ENCODE measurements at regions of chr10 and their contacts with region 1.

Region 1: GRCh38 chr10:3811291-3811870 is 26.4 kb upstream of the KLF6 start:
- DNase-seq: peak; percentile 65
- H3K4me3 Mint-ChIP-seq: peak overlapping the region; percentile 38
- H3K27ac Mint-ChIP-seq: peak overlapping the region; percentile 96
- H3K4me1 Mint-ChIP-seq: peaks cover 79% of the 10 kb centered on the region
- H3K27me3 Mint-ChIP-seq: no peaks in the 10 kb centered on the region

Region 2: GRCh38 chr10:3226960-3227744 is 584.2 kb before region 1 on chr10:
- intact Hi-C with region 1: loop called (anchors 2 kb)
- DNase-seq: no peak
- H3K4me3 Mint-ChIP-seq: no peak overlapping the region
- H3K27ac Mint-ChIP-seq: no peak overlapping the region
- H3K4me1 Mint-ChIP-seq: peaks cover 15% of the 10 kb centered on the region
- H3K27me3 Mint-ChIP-seq: peaks cover 26% of the 10 kb centered on the region

Region 3: GRCh38 chr10:3828404-3829155 is 17.2 kb after region 1 on chr10:
- intact Hi-C with region 1: loop called (anchors 1 kb)
- DNase-seq: no peak
- H3K4me3 Mint-ChIP-seq: peak overlapping the region; percentile 42
- H3K27ac Mint-ChIP-seq: peak overlapping the region; percentile 88
- H3K4me1 Mint-ChIP-seq: peaks cover 47% of the 10 kb centered on the region
- H3K27me3 Mint-ChIP-seq: no peaks in the 10 kb centered on the region

Region 4: GRCh38 chr10:3867454-3868270 is 56.3 kb after region 1 on chr10:
- intact Hi-C with region 1: loop called (anchors 1 kb)
- DNase-seq: no peak
- H3K4me3 Mint-ChIP-seq: no peak overlapping the region
- H3K27ac Mint-ChIP-seq: peak overlapping the region; percentile 88
- H3K4me1 Mint-ChIP-seq: peaks cover 60% of the 10 kb centered on the region
- H3K27me3 Mint-ChIP-seq: no peaks in the 10 kb centered on the region

Region 5: GRCh38 chr10:3972460-3973301 is 161.3 kb after region 1 on chr10:
- intact Hi-C with region 1: loop called (anchors 1 kb)
- DNase-seq: no peak
- H3K4me3 Mint-ChIP-seq: peak overlapping the region; percentile 68
- H3K27ac Mint-ChIP-seq: peak overlapping the region; percentile 95
- H3K4me1 Mint-ChIP-seq: peaks cover 42% of the 10 kb centered on the region
- H3K27me3 Mint-ChIP-seq: no peaks in the 10 kb centered on the region

Region 6: DNA sequence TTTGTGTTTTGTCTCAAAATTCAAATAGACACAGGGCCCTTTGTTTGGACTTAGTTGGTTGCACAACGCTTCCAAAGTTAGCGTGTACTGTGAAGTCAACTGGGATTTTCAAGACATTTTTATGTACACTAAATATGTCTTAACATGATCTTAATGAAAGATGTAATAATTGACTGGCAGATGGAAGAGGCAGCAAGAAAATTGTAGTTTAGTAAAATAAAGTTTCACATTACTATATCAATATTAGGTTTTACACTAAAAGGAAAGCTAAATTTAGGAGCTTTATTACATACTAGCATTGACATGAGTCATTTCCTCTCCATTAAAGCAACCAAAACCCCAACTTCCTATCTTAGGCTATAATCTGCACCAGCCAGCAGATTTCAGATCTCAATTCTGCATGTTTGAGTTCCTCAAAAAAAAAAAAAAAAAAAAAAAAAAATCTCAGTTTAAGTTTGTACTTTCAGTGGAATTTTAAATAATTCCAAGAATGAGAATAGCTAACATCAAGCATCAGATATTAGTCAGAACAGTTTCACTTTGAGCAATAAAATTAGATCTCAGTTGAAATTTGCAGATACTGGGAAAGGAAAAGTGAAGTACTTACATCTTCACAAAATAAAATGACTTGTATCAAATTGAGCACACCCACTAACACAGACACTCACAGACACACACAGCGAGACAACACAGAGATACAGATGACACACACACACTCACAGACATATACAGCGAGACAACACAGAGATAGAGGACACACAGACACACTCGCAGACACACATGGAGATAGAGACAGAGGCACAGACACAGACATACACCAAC is 320.2 kb after region 1 on chr10:
- intact Hi-C with region 1: loop called (anchors 1 kb)
- DNase-seq: peak; percentile 37
- H3K4me3 Mint-ChIP-seq: no peak overlapping the region
- H3K27ac Mint-ChIP-seq: no peak overlapping the region
- H3K4me1 Mint-ChIP-seq: peaks cover 46% of the 10 kb centered on the region
- H3K27me3 Mint-ChIP-seq: no peaks in the 10 kb centered on the region